Activated CD4-positive, alpha-beta T cell treated with anti-CD3 and anti-CD28 coated beads for 36 hours (primary cell): ENCODE measurements at regions of chr2 and their contacts with region 1.

Region 1: DNA sequence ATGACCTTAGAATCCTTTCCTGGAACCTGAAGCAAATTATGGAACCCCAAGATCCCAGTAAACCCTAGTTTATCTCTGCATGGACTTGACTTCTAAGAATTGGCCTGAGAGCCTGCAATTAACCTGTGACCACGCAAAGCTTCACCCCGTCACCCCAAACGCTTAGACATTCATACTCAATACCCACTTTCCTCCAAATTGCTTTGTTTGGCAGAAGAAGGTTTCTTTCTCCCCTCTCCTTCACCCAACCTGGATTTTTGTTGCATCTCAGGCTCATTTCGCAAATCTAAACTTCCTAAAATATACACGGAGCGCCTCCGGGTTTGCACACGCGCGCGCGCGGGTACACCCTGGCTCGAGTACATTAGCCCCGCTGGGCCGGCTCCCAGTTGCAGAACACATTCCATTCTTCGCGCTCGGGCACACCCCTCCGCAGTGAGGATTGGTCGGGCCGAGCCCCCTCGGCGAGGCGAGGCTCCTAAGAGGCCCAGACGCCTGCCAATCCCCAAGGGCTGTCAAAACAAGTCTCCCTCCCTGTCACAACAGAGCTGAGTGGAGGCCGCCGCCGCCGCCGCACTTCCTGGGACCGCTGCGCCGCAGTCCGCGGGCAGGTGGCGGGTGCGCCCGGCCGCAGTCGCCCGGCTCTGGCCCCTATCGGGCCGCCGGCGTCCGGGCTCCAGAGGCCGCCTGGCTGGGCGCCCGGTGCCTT is at the start of gene PLCL1:
- DNase-seq: peak; percentile 94
- ATAC-seq: peak; percentile 99
- H3K4me3 Mint-ChIP-seq: peak within 1 kb of the TSS; percentile 89
- H3K27ac Mint-ChIP-seq: peak within 1 kb of the TSS; percentile 84
- H3K4me1 Mint-ChIP-seq: peaks cover 45% of the 10 kb centered on the region
- H3K27me3 Mint-ChIP-seq: peaks cover 2% of the 10 kb centered on the region
- total RNA-seq, gene PLCL1: 1.6 to 1.7 TPM

Region 2: DNA sequence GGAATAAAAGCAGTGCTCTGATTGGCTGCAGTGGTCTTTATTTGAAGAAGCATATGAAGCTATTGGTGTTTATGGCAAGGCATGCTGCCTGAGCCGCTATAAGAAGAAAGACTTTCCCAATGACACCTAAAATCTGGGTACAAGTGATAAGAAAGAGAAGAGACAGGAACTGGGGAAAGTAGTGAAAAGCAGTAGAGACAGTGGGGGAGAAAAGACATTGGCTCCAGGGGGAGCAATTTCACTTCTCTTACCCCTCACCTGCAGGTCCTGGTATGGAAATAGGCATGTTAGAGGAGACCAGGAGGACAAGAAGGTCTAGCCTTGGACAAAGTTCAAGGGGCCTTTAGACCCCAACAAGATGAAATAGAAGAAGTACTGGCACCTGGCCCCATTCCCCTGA is 47.2 kb after region 1 on chr2:
- CTCF ChIA-PET with region 1: interaction called, 5 read pairs
- POLR2A ChIA-PET with region 1: interaction called, 3 read pairs
- intact Hi-C with region 1: loop called in 1 of 2 experiments (anchors 2 kb)
- DNase-seq: no peak
- ATAC-seq: no peak
- H3K4me3 Mint-ChIP-seq: no peak overlapping the region
- H3K27ac Mint-ChIP-seq: no peak overlapping the region
- H3K4me1 Mint-ChIP-seq: peaks cover 84% of the 10 kb centered on the region
- H3K27me3 Mint-ChIP-seq: no peaks in the 10 kb centered on the region

Region 3: DNA sequence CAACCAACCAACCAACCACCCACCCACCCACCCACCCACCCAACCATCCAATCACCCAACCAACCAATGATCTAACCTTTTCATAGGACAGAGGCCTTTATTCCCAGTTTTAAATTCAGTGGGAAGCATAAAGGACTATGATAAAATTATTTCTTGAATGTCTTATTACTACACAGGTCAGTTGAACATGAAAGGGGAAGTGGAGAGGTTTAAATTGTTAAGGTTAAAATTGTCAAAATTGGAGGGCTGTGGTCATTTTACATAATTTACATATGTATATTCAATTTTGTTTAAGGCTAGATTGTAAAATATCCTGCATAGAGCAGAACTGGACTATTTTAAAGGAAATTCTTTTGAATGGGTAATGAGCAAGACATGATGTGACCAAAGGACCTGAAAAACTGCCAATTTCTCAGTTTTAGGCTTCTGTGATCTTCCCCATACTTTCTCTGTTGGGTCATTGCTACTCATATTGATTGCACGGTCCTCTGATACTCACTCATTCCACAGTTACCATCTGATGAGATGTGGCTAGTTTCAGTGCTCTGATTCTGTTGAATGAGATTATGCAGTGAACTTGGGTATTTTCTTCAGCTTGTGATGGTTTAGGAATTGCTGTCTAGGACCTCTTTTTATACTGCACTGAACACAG is 127.6 kb after region 1 on chr2:
- CTCF ChIA-PET with region 1: no interaction called
- POLR2A ChIA-PET with region 1: no interaction called
- intact Hi-C with region 1: loop called in 1 of 2 experiments (anchors 5 kb)
- DNase-seq: no peak
- ATAC-seq: peak; percentile 65
- H3K4me3 Mint-ChIP-seq: no peak overlapping the region
- H3K27ac Mint-ChIP-seq: no peak overlapping the region
- H3K4me1 Mint-ChIP-seq: peaks cover 47% of the 10 kb centered on the region
- H3K27me3 Mint-ChIP-seq: no peaks in the 10 kb centered on the region

Region 4: DNA sequence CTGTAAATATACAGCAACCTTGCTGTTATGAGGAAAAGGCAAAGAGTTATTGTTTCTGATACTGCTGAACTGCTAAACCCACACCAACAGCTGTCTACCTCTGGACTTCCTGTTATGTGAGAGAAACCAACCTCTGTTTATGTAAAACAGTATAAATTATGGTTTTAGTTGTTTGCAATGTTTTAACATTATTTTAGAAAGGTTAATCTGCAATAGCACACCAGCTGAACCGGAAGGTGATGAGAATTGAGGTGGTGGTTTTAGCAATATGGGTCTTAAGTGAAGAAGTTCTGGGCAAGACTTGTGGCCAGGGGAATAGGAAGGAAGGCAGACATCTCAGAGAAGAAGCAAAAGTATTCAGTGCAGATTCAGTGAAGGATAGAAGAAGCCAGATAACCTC is 238.0 kb after region 1 on chr2:
- CTCF ChIA-PET with region 1: interaction called, 3 read pairs
- POLR2A ChIA-PET with region 1: no interaction called
- intact Hi-C with region 1: loop called (anchors 2 kb)
- DNase-seq: no peak
- ATAC-seq: no peak
- H3K4me3 Mint-ChIP-seq: no peak overlapping the region
- H3K27ac Mint-ChIP-seq: no peak overlapping the region
- H3K4me1 Mint-ChIP-seq: peaks cover 27% of the 10 kb centered on the region
- H3K27me3 Mint-ChIP-seq: no peaks in the 10 kb centered on the region

Region 5: GRCh38 chr2:198127627-198128026 is 323.4 kb after region 1 on chr2:
- CTCF ChIA-PET with region 1: interaction called, 22 read pairs
- POLR2A ChIA-PET with region 1: no interaction called
- intact Hi-C with region 1: loop called (anchors 1 kb)
- DNase-seq: peak; percentile 71
- ATAC-seq: peak; percentile 72
- H3K4me3 Mint-ChIP-seq: no peak overlapping the region
- H3K27ac Mint-ChIP-seq: no peak overlapping the region
- H3K4me1 Mint-ChIP-seq: peaks cover 8% of the 10 kb centered on the region
- H3K27me3 Mint-ChIP-seq: no peaks in the 10 kb centered on the region

Region 6: DNA sequence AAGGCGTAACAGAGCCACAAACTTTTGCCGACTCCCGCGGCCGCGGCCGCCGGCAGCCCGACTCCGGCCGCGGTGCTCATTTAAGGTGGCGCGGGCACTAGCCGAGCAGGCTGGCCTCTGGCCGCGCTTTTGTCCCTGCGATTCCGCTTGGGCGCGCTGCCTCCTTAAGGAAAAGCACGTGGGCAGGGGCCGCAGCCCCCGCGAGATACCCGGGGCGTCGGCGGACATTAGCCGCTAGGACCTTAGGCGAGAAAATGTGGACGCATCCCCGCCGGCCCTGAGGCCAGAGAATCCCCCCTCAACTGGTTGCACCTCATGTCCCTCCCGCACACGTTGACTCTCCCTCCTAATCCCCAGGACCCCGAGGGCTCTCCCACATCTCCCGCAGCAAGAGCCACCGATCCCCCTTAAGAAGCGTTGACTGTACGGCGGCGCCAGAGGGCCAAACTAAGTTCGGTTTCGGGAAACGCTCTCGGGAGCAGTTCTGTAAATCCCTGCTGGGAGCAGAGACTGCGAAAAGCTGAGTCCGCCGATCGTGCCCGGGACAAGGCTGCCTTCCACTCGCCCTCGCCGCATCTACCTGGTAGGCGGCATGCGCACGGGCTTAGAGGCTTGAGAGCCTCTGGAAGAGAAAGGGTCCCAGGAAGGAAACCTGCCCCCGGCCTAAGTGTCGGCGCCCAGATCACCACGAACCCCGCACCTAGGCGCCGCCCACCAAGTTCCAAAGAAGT is 1655.2 kb after region 1 on chr2:
- CTCF ChIA-PET with region 1: no interaction called
- POLR2A ChIA-PET with region 1: no interaction called
- intact Hi-C with region 1: loop called in 1 of 2 experiments (anchors 10 kb)
- DNase-seq: peak; percentile 80
- ATAC-seq: peak; percentile 7
- H3K4me3 Mint-ChIP-seq: peak overlapping the region; percentile 82
- H3K27ac Mint-ChIP-seq: peak overlapping the region; percentile 78
- H3K4me1 Mint-ChIP-seq: peaks cover 24% of the 10 kb centered on the region
- H3K27me3 Mint-ChIP-seq: peaks cover 41% of the 10 kb centered on the region